Naive thymus-derived CD4-positive, alpha-beta T cell (primary cell): ENCODE measurements at regions of chr20 and their contacts with region 1.

Region 1: DNA sequence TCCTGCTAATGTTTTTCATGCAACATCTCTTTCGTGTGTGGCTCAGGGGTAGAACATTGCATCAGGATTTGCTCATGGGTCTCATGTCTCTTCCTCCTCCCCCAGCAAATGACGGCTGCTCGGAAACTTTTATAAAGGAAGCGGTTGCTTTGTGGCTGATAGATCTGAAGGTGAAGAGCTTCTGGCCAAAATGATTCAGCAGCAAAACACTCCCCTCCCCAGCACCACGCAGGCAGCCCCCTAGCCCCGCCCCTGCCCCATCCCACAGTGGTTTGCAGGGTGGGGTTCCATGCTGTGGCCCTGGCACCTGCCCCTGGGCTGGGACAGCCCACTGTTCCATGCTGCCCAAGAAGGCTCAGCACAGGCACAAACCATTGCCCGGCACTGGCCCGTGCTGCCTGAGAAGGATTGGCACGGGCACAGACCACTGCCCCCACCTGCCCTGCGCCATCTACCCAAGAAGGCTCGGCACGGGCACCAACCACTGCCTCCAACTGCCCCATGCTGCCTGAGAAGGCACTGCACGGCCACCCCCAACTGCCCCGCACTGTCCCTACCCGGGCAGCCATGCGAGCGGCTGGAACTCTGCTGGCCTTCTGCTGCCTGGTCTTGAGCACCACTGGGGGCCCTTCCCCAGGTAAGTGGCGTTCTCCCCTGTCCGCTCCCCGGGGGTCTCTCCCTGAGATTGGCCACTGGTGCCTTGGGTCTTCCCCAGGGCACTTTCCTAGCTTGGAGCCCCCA is at the start of gene CST7:
- DNase-seq: peak; percentile 33 to 85 (median 77)
- ATAC-seq: peak; percentile 90
- H3K4me3 ChIP-seq: peak within 1 kb of the TSS; percentile 66
- H3K4me3 Mint-ChIP-seq: peak within 1 kb of the TSS in 9 of 10 donors; percentile 27 to 94 (median 54)
- H3K27ac ChIP-seq: no peak within 1 kb of the TSS
- H3K27ac Mint-ChIP-seq: peak within 1 kb of the TSS; percentile 21 to 94 (median 80)
- H3K4me1 ChIP-seq: peaks cover 6 to 33% of the 10 kb centered on the region in 2 donors
- H3K4me1 Mint-ChIP-seq: peaks cover 12 to 75% (median 25%) of the 10 kb centered on the region in 7 donors
- H3K27me3 ChIP-seq: no peaks in the 10 kb centered on the region
- H3K27me3 Mint-ChIP-seq: no peaks in the 10 kb centered on the region
- total RNA-seq, gene CST7: 1.4 to 74.9 (median 11.5) TPM

Region 2: DNA sequence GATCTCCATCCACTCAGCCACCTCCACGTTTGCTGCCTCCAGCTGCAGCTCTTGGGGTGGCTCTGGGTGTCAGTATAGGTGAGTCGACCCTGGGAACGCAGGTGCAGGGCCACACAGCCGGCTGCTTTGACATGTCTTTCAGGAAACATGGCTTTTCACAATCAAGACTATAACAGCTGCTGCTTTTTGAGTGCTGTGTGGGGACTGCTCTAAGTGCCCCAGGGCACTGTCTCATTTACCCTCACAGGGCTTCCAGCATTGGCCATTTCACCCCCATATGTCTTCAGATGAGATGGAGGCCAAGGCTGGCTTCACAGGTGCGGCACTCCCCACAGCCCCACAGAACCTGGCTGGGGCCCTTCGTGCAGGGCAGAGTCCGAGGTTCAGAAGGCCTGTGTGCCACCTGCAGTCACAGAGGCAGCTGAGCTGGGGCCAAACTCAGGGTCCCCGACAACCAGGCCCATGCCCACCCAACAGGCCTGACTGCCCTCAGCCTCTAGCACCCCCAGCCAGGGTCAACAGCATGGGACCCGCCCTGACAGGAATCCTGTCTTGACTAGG is 14.9 kb before region 1 on chr20:
- CTCF ChIA-PET with region 1: no interaction called
- POLR2A ChIA-PET with region 1: interaction called, 3 read pairs
- intact Hi-C with region 1: loop called (anchors 1 kb)
- DNase-seq: no peak
- ATAC-seq: no peak
- H3K4me3 ChIP-seq: no peak overlapping the region
- H3K4me3 Mint-ChIP-seq: no peak overlapping the region
- H3K27ac ChIP-seq: no peak overlapping the region
- H3K27ac Mint-ChIP-seq: no peak overlapping the region
- H3K4me1 ChIP-seq: peaks cover 16 to 30% of the 10 kb centered on the region in 2 donors
- H3K4me1 Mint-ChIP-seq: peaks cover 19 to 50% (median 25%) of the 10 kb centered on the region in 7 donors
- H3K27me3 ChIP-seq: no peaks in the 10 kb centered on the region
- H3K27me3 Mint-ChIP-seq: no peaks in the 10 kb centered on the region